ENCODE measurements at regions of chr1 and their contacts with region 1.

Region 1: DNA sequence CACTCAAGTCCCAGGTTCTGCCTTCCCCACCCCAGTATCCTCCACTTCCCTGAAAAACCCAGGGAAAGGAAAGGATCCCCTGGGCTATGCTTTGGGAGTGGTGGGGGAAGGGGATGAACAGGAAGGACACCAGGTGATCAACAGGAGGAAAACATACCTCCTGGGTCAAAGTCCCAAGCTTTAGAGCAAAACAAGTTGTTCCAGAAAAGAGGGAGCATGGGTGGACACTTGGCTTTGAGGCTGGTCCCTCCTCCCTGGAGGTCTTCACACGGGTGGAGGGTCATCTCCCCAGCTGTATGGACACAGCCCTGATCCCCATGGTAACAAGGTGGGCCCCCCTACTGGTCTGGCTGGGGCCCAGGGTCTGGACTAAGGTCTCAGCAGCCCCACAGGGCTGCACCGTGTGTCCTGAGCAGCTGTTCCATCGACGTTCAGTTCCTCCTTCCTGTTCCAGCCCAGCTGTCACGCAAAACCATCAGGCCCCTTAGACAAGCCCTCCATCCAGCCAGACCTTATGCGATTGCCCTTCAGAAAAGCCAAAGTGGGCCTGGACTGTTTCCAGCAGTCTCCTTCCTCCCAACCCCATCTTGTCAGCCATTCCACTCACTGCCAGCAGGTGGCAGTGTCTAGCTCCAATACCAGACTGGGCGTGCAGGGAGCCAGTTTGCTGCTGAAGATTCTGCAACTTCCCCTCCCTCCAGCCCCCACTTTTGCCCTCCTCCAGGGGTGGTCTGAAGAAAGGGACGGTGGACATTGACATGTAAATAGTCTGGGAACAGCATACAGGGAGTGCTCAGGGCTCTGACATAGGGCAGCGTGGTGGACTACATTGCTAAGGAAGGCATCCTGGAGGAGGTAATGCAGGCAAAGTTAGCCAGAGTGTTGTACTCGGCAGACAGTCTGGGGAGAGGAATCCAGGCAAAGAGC is 2.9 kb upstream of the PDZK1IP1 start:
- DNase-seq: peak; percentile 62
- H3K4me3 ChIP-seq: no peak overlapping the region
- H3K27ac ChIP-seq: no peak overlapping the region
- H3K4me1 ChIP-seq: no peaks in the 10 kb centered on the region
- CTCF ChIP-seq: peak; percentile 96

Region 2: GRCh38 chr1:47249755-47250154 is 57.0 kb after region 1 on chr1:
- CTCF ChIA-PET with region 1: no interaction called
- POLR2A ChIA-PET with region 1: no interaction called
- intact Hi-C with region 1: loop called (anchors 5 kb)
- DNase-seq: no peak
- H3K4me3 ChIP-seq: no peak overlapping the region
- H3K27ac ChIP-seq: no peak overlapping the region
- H3K4me1 ChIP-seq: no peaks in the 10 kb centered on the region
- CTCF ChIP-seq: no peak

Region 3: GRCh38 chr1:47262787-47263413 is 70.2 kb after region 1 on chr1:
- CTCF ChIA-PET with region 1: interaction called, 3 read pairs
- POLR2A ChIA-PET with region 1: no interaction called
- intact Hi-C with region 1: loop called (anchors 1 kb)
- DNase-seq: peak; percentile 53
- H3K4me3 ChIP-seq: no peak overlapping the region
- H3K27ac ChIP-seq: no peak overlapping the region
- H3K4me1 ChIP-seq: no peaks in the 10 kb centered on the region
- CTCF ChIP-seq: peak; percentile 89

Region 4: GRCh38 chr1:47710329-47711071 is 517.8 kb after region 1 on chr1:
- CTCF ChIA-PET with region 1: no interaction called
- POLR2A ChIA-PET with region 1: no interaction called
- intact Hi-C with region 1: loop called (anchors 10 kb)
- DNase-seq: peak; percentile 38
- H3K4me3 ChIP-seq: no peak overlapping the region
- H3K27ac ChIP-seq: no peak overlapping the region
- H3K4me1 ChIP-seq: no peaks in the 10 kb centered on the region
- CTCF ChIP-seq: peak; percentile 87

Measured in OCI-LY7 (cell line).